Activated CD4-positive, alpha-beta T cell treated with anti-CD3 and anti-CD28 coated beads for 36 hours (primary cell): ENCODE measurements at regions of chr11 and their contacts with region 1.

Region 1: GRCh38 chr11:62694455-62695167 is 5.3 kb upstream of the LRRN4CL start:
- DNase-seq: peak; percentile 86
- ATAC-seq: peak; percentile 95
- H3K4me3 Mint-ChIP-seq: no peak overlapping the region
- H3K27ac Mint-ChIP-seq: no peak overlapping the region
- H3K4me1 Mint-ChIP-seq: peaks cover 5% of the 10 kb centered on the region
- H3K27me3 Mint-ChIP-seq: no peaks in the 10 kb centered on the region

Region 2: GRCh38 chr11:63375434-63375833 is 680.8 kb after region 1 on chr11:
- CTCF ChIA-PET with region 1: no interaction called
- POLR2A ChIA-PET with region 1: no interaction called
- intact Hi-C with region 1: loop called in 1 of 2 experiments (anchors 5 kb)
- DNase-seq: no peak
- ATAC-seq: no peak
- H3K4me3 Mint-ChIP-seq: no peak overlapping the region
- H3K27ac Mint-ChIP-seq: no peak overlapping the region
- H3K4me1 Mint-ChIP-seq: no peaks in the 10 kb centered on the region
- H3K27me3 Mint-ChIP-seq: peaks cover 23% of the 10 kb centered on the region